ENCODE measurements at regions of chr11 and their contacts with region 1.

Region 1: GRCh38 chr11:62771144-62772021 is at the start of gene TAF6L:
- DNase-seq: peak; percentile 96
- ATAC-seq: peak; percentile 91
- H3K4me3 Mint-ChIP-seq: peak within 1 kb of the TSS; percentile 91
- H3K27ac Mint-ChIP-seq: peak within 1 kb of the TSS; percentile 93
- H3K4me1 Mint-ChIP-seq: peaks cover 27% of the 10 kb centered on the region
- H3K27me3 Mint-ChIP-seq: no peaks in the 10 kb centered on the region
- total RNA-seq, gene TAF6L: 21.8 to 23.7 TPM

Region 2: DNA sequence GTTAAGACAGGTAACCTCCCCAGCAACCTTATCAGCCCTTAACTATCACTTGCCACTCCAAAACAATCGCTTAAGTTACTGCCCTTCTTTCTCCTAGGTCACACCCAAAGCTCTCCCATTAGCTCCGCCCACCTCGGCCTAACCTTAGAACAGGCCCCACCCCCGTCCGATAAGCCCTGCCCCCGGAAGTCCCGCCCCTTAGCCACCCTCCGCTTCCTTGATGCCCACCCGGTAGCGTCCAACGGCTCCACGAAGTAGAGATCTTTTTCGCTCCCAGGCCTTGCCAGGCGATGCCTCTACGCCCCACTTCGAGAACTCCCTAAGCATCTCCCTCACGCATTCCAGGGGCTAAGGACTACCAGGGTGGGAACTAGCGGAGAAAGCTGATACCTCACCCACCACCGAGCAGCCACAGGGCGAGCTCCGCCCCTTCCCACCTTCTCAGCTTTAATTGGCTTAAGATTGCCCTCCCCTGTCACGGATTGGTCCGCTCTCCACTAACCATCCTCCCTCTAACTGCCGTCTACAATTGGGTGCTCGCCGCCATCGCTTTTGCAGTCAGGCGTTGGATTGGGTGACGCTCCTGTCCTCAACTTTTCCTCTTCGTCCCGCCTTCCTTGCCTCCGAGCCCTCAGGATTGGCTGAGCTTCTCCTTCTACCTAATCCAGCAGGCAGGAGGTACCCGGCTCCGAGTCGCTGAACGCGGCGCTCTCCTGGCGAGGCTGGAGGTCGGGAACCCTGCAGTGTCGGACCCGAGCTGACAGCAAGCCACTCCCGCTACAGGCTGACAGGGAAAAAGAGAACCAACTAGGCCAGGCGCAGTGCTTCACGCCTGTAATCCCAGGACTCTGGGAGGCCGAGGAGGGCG is 17.4 kb before region 1 on chr11 and contains the start of gene ZBTB3:
- CTCF ChIA-PET with region 1: interaction called, 22 read pairs
- POLR2A ChIA-PET with region 1: interaction called, 13 read pairs
- DNase-seq: peak; percentile 99
- ATAC-seq: peak; percentile 99
- H3K4me3 Mint-ChIP-seq: peak within 1 kb of the TSS; percentile 94
- H3K27ac Mint-ChIP-seq: peak within 1 kb of the TSS; percentile 97
- H3K4me1 Mint-ChIP-seq: peaks cover 31% of the 10 kb centered on the region
- H3K27me3 Mint-ChIP-seq: no peaks in the 10 kb centered on the region
- total RNA-seq, gene ZBTB3: 12.4 to 12.8 TPM

Region 3: GRCh38 chr11:62796281-62796680 is 24.9 kb after region 1 on chr11:
- CTCF ChIA-PET with region 1: no interaction called
- POLR2A ChIA-PET with region 1: no interaction called
- DNase-seq: no peak
- ATAC-seq: no peak
- H3K4me3 Mint-ChIP-seq: no peak overlapping the region
- H3K27ac Mint-ChIP-seq: no peak overlapping the region
- H3K4me1 Mint-ChIP-seq: peaks cover 11% of the 10 kb centered on the region
- H3K27me3 Mint-ChIP-seq: no peaks in the 10 kb centered on the region

Measured in activated CD8-positive, alpha-beta T cell treated with anti-CD3 and anti-CD28 coated beads, Interleukin-2, amount 10 ng/mL, durations not matched to agents 7 days and 5 days (primary cell).